Spleen (tissue), 13 donors: ENCODE measurements at regions of chr10 and their contacts with region 1.

Region 1: GRCh38 chr10:24360282-24361127 is 151.6 kb downstream of the KIAA1217 start:
- DNase-seq: no peak
- H3K4me3 ChIP-seq: no peak overlapping the region
- H3K27ac ChIP-seq: no peak overlapping the region
- H3K4me1 ChIP-seq: peaks cover 0 to 4% (median 0%) of the 10 kb centered on the region in 6 donors
- H3K27me3 ChIP-seq: no peaks in the 10 kb centered on the region
- CTCF ChIP-seq: peak; percentile 11 to 64 (median 43)
- POLR2A ChIP-seq: no peak

Region 2: GRCh38 chr10:24209946-24210491 is 150.5 kb before region 1 on chr10:
- intact Hi-C with region 1: loop called (anchors 10 kb)
- DNase-seq: no peak
- H3K4me3 ChIP-seq: peak overlapping the region in 7 of 8 donors; percentile 22 to 68 (median 40)
- H3K27ac ChIP-seq: peak overlapping the region in 7 of 8 donors; percentile 23 to 89 (median 78)
- H3K4me1 ChIP-seq: peaks cover 0 to 48% (median 13%) of the 10 kb centered on the region in 6 donors
- H3K27me3 ChIP-seq: peaks cover 0 to 26% (median 0%) of the 10 kb centered on the region in 7 donors
- CTCF ChIP-seq: no peak
- POLR2A ChIP-seq: no peak

Region 3: DNA sequence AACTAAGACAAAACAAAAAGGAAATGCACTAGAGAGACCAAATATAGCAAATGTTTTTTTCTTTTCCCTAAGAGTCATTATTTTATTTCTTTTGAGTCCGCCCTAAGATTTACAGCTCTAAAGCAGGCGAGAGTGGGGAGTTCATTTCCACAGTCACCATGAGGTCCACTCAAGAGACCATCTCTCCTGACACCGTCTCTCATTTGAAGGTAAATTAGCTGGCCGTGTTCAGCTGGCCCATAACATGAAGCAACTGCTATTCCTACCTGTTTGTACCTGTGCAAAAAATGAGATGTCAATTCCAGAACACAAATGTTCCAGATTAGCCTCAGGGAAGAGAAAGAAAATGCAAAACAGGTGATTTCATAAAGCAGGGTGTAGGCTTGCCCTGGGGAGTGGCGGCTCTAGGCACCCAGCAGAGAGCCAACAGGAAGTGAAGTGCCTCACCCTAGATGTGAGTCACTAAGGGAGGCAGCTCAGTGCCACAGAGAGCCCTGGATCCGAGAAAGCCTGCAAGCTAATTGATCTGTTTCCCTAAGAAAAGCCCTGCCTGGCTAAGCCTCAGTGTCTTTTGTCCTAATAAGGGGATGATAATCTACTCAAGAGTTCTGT is 123.1 kb after region 1 on chr10:
- intact Hi-C with region 1: no loop called
- DNase-seq: no peak
- H3K4me3 ChIP-seq: no peak overlapping the region
- H3K27ac ChIP-seq: no peak overlapping the region
- H3K4me1 ChIP-seq: peaks cover 0 to 6% (median 0%) of the 10 kb centered on the region in 6 donors
- H3K27me3 ChIP-seq: no peaks in the 10 kb centered on the region
- CTCF ChIP-seq: no peak
- POLR2A ChIP-seq: no peak

Region 4: DNA sequence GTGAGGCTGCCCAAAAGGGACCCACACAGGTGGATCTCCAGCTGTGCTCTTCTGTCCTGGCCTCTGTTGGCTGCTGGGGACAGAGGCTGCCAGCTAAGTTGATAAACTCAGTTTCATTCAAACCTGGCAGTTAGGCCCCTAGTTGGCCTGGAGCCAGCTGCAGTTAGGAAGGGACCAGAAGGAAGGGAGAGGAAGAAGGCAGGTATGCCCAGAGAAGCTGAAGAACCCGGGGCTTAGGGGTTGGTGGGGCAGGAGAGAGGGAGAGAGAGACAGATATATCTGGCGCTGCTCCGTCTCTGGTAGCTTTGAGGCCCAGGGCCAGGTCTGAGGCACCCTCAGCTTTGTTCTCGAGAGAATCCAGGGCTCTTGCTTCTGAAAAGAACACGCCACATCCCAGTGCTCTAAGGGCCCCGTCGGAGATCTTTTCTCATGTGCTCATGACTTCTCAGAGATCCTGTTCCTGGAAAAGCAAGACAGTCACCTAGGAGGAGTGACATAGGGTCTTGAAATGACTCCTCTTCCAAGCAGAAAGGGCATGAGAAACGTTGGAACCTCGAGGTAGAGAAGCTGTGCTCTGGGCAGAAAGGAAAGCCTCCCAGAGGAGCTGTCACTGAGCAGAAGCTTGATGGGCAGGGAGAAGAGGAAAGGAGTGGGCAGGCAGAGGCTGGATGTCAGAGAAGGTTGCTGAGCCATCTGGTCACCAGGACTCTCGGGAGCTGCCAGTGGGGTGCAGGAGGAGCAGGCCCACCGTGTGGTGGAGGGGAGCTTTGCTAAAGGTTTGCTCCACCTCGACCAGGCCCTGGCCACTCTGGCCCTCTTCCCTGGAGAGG is 209.5 kb after region 1 on chr10:
- intact Hi-C with region 1: no loop called
- DNase-seq: no peak
- H3K4me3 ChIP-seq: no peak overlapping the region
- H3K27ac ChIP-seq: no peak overlapping the region
- H3K4me1 ChIP-seq: no peaks in the 10 kb centered on the region
- H3K27me3 ChIP-seq: peaks cover 0 to 4% (median 0%) of the 10 kb centered on the region in 7 donors
- CTCF ChIP-seq: no peak
- POLR2A ChIP-seq: no peak